Stomach (tissue), 19 donors: ENCODE measurements at regions of chr17 and their contacts with region 1.

Region 1: GRCh38 chr17:40086150-40087044 is 14.0 kb downstream of the NR1D1 start:
- DNase-seq: peak; percentile 73 to 80
- H3K4me3 ChIP-seq: no peak overlapping the region
- H3K27ac ChIP-seq: peak overlapping the region in 3 of 5 donors; percentile 23 to 56 (median 51)
- H3K4me1 ChIP-seq: peaks cover 11 to 49% (median 27%) of the 10 kb centered on the region in 4 donors
- H3K27me3 ChIP-seq: no peaks in the 10 kb centered on the region
- CTCF ChIP-seq: peak in 5 of 7 experiments; percentile 70 to 89 (median 81)
- EP300 ChIP-seq: no peak
- POLR2A ChIP-seq: no peak

Region 2: DNA sequence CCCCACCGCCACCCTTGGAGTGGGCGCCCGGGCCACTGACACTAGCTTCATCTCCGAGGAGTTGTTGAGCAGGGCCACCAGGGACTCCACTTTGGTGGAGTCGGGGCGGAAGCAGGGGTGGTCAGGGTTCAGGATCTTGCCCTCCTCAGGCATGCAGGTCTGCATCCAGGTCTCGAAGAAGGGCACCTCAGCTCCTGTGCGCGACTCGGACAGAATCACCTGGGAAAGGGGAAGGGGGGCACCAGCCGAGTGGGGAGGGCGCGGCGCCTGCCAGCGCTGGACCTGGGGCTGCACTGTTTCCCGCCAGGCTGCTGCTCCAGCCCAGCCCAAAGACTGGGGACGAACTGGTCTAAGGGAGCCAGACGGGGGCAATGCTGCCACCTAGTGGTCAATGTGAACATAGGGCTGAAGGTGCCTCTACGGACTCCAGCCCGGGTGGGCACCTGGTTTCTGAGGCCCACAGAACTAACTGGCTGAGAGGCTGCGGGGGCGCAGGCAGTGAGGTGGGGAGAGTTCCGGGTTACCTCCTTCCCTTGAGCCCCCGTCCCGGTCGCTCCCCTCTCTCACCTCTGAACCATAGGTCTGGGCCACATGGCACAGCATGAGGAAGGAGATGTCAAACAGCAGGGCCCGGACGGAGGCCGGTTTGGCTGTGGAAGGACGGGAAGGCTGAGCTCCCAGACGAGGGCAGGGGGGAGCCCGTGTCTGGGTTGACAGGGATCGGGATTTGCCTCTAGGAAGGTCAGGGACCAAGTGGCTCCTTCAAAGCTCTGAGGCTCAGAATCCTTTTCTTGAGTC is 59.4 kb before region 1 on chr17:
- intact Hi-C with region 1: loop called (anchors 10 kb)
- DNase-seq: peak; percentile 86 to 95
- H3K4me3 ChIP-seq: no peak overlapping the region
- H3K27ac ChIP-seq: peak overlapping the region in 2 of 5 donors; percentile 32 to 44
- H3K4me1 ChIP-seq: peaks cover 44 to 58% (median 52%) of the 10 kb centered on the region in 4 donors
- H3K27me3 ChIP-seq: no peaks in the 10 kb centered on the region
- CTCF ChIP-seq: peak in 5 of 7 experiments; percentile 80 to 96 (median 93)
- EP300 ChIP-seq: no peak
- POLR2A ChIP-seq: no peak